Activated T-helper 1 cell treated with anti-CD3 and anti-CD28 coated beads, Interleukin-12 subunit alpha, Interleukin-12 subunit beta, Interleukin-2, Interleukin-4 antibody, amounts not matched to agents 30 ng/mL and 10 ng/mL and 1 ng/mL, durations not matched to agents 14 hours and 24 hours and 36 hours (primary cell): ENCODE measurements at regions of chr10 and their contacts with region 1.

Region 1: GRCh38 chr10:50624866-50625692 is 1.3 kb upstream of the SGMS1 start:
- DNase-seq: no peak
- H3K4me3 Mint-ChIP-seq: peak overlapping the region; percentile 89
- H3K27ac Mint-ChIP-seq: peak overlapping the region; percentile 88
- H3K4me1 Mint-ChIP-seq: peaks cover 43% of the 10 kb centered on the region
- H3K27me3 Mint-ChIP-seq: no peaks in the 10 kb centered on the region

Region 2: GRCh38 chr10:50325449-50326171 is 299.5 kb before region 1 on chr10:
- intact Hi-C with region 1: loop called (anchors 5 kb)
- DNase-seq: peak; percentile 15
- H3K4me3 Mint-ChIP-seq: peak overlapping the region; percentile 79
- H3K27ac Mint-ChIP-seq: peak overlapping the region; percentile 19
- H3K4me1 Mint-ChIP-seq: peaks cover 74% of the 10 kb centered on the region
- H3K27me3 Mint-ChIP-seq: no peaks in the 10 kb centered on the region

Region 3: DNA sequence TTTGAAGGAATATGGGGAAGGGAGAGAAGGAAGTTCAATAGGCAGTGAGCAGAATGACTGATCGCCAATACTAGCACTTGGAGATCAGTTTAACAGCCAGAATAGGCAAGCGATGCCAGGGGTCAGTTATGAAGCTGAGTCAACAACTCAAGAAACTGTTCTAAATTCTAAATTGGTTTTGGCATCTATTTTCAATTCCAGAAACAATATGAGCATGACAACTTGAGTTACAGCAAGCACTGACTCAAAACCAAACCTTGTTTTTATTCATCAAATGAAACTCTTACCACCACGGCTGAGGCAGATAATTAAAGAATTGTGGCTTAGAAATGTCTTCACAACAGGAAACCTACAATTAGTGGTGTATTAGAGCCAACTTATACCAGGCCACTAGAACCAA is 193.3 kb before region 1 on chr10:
- intact Hi-C with region 1: loop called (anchors 1 kb)
- DNase-seq: no peak
- H3K4me3 Mint-ChIP-seq: peak overlapping the region; percentile 37
- H3K27ac Mint-ChIP-seq: peak overlapping the region; percentile 67
- H3K4me1 Mint-ChIP-seq: peaks cover 35% of the 10 kb centered on the region
- H3K27me3 Mint-ChIP-seq: no peaks in the 10 kb centered on the region

Region 4: DNA sequence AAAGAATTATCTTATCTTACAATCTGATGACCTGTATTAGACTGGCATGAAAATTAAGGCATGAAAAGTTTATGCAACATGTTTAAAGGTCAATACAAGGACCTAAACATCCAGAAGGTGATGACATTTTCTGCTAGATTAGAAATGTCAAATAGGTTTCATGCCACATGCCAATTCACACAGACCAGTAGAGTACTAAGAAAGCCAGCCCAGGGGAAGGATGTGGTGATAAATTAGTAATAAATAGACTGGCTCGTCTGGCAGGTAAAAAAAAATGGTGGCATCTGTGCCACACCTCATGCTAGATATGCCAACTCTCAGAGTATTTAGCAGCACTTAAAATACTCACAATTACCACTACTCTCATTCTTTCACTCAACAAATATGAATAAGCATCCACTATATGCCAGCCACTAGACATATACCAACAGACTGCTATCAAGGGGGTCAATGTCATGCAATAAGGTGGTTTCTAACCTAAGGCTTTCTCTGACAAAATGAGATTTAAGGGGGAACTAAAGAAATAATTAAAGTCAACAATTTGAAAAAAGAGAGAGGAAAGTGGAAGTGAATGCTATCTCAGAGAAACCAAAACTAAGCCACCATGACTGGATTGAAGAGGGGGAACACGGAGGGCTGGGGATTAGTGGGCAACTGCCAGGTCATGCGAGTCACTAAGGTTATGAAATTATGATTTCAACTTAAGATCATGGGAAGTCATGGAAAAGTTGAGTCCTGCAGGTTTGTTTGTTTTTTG is 84.8 kb before region 1 on chr10:
- intact Hi-C with region 1: loop called (anchors 1 kb)
- DNase-seq: no peak
- H3K4me3 Mint-ChIP-seq: peak overlapping the region; percentile 41
- H3K27ac Mint-ChIP-seq: peak overlapping the region; percentile 95
- H3K4me1 Mint-ChIP-seq: peaks cover 87% of the 10 kb centered on the region
- H3K27me3 Mint-ChIP-seq: no peaks in the 10 kb centered on the region

Region 5: GRCh38 chr10:50636618-50637579 is 11.8 kb after region 1 on chr10:
- intact Hi-C with region 1: loop called (anchors 1 kb)
- DNase-seq: peak; percentile 40
- H3K4me3 Mint-ChIP-seq: peak overlapping the region; percentile 41
- H3K27ac Mint-ChIP-seq: peak overlapping the region; percentile 1
- H3K4me1 Mint-ChIP-seq: peaks cover 43% of the 10 kb centered on the region
- H3K27me3 Mint-ChIP-seq: peaks cover 29% of the 10 kb centered on the region

Region 6: DNA sequence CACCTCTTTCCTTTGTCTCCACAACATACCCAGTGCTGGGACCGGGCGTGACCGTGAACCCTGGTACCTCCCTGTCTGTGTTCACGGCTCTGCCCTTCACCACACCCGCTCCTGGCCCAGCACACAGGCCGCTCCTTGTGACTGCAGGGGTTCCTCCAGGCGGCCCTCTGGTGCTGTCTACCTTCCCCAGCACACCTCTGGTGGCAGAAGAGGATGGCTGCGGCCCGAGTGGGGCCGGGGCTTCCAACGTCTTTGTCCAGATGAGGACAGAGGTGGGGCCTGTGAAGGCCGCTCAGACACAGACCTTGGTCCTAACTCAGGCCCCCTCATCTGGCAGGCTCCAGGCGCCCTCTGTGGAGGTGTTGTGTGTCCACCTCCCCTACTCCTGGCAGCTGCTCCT is 54.1 kb after region 1 on chr10:
- intact Hi-C with region 1: no loop called
- DNase-seq: no peak
- H3K4me3 Mint-ChIP-seq: no peak overlapping the region
- H3K27ac Mint-ChIP-seq: no peak overlapping the region
- H3K4me1 Mint-ChIP-seq: peaks cover 9% of the 10 kb centered on the region
- H3K27me3 Mint-ChIP-seq: peaks cover 6% of the 10 kb centered on the region

Region 7: GRCh38 chr10:50739618-50740292 is 114.7 kb after region 1 on chr10 and contains the start of gene ASAH2B:
- intact Hi-C with region 1: loop called (anchors 1 kb)
- DNase-seq: peak; percentile 65
- H3K4me3 Mint-ChIP-seq: peak within 1 kb of the TSS; percentile 98
- H3K27ac Mint-ChIP-seq: peak within 1 kb of the TSS; percentile 93
- H3K4me1 Mint-ChIP-seq: peaks cover 17% of the 10 kb centered on the region
- H3K27me3 Mint-ChIP-seq: peaks cover 18% of the 10 kb centered on the region
- total RNA-seq, gene ASAH2B: 2.9 and 4.0 TPM in 2 replicates